ENCODE measurements at regions of chr13 and their contacts with region 1.

Region 1: DNA sequence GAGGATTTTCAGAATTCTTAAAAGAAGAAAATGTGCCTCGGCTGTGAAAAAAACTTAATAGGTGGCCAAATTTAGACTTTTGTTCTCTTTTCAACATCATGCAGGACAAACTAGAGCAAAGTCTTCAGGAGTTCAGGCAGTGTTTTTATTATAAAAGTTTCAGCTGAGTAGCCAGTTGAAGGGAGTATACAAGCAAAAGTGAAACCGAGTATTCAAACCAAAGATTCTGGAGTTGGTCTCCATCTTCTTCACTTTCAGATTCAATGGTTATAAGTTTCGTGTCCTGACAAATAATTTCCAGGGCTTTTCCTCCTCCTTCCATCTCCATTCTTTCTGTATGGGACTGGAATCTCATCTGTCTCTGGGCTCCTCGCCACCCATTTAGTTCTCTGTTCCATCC is 379.7 kb downstream of the GPC5 start:
- DNase-seq: no peak
- H3K4me3 ChIP-seq: no peak overlapping the region
- H3K27ac ChIP-seq: no peak overlapping the region
- H3K4me1 ChIP-seq: no peaks in the 10 kb centered on the region
- CTCF ChIP-seq: no peak

Region 2: DNA sequence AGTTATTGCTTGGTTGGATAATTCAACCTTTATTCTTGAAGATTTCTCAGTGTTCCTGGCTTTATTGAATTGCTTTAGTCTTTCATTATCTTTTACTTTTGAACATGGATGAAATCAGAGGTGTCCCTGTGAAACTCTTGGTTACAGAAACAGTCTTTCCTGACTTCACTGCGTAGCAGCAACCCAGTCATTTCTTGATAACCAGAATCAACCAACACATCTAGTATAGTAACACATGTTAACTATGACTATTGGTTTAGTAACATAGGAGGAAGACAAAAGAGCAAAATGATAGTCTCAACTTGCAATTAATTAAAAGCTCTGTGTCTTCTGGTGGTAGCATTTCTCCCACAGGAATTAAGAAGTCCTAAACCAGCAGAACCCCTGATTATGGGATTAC is 13.9 kb after region 1 on chr13:
- CTCF ChIA-PET with region 1: no interaction called
- POLR2A ChIA-PET with region 1: interaction called, 37 read pairs
- intact Hi-C with region 1: no loop called
- DNase-seq: no peak
- H3K4me3 ChIP-seq: no peak overlapping the region
- H3K27ac ChIP-seq: no peak overlapping the region
- H3K4me1 ChIP-seq: no peaks in the 10 kb centered on the region
- CTCF ChIP-seq: no peak

Region 3: GRCh38 chr13:91836554-91836953 is 58.4 kb after region 1 on chr13:
- CTCF ChIA-PET with region 1: no interaction called
- POLR2A ChIA-PET with region 1: no interaction called
- intact Hi-C with region 1: no loop called
- DNase-seq: no peak
- H3K4me3 ChIP-seq: no peak overlapping the region
- H3K27ac ChIP-seq: no peak overlapping the region
- H3K4me1 ChIP-seq: no peaks in the 10 kb centered on the region
- CTCF ChIP-seq: no peak

Measured in OCI-LY7 (cell line).